Endothelial cell of umbilical vein (primary cell): ENCODE measurements at regions of chr5 and their contacts with region 1.

Region 1: DNA sequence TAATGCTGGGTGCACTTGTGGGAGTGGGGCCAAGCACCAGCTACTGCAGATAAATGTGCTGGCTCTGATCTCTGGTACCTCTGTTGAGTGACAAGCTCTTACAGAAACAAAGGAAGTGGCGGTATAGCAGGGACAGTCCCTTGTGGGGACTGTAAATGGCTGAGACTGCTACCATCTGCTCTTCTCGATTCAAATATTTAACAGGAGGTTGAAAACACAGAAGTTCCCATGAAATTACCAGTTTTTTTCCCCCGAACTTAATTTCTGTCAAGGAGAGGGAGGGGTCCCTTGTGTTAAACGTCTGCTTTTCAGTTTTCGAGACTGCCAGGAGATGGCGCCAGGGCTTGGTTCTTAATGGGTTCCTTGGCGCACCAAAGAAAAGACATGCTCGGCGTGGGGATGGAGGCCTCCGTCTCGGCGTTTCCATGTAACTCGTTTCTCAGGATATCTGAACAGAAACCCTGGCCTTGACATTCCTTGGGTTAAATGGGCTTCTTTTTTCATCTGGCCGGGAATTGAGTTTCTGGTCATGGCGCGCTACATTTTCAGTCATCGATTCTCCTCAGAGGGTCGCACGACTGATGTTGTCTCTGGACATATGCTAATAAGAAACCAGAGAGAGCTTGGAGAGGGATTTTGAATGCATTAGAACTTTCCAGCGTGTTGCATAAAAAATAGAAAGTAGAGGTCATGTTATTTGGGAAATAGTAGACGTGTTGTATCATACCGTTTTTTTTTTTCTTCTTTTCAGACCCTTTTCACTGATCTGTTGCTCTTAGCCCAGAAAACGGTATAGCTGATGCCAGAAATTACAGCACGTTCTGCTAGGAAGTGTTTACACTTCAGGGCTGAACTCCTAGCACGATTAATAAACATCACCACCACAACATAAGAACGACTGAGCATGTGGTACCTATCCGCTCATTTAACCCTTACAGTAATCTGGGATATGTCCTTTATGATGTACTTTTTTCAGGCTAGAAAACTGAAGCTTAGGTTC is 64.0 kb downstream of the CARTPT start:
- DNase-seq: peak; percentile 74
- H3K4me3 ChIP-seq: no peak overlapping the region
- H3K27ac ChIP-seq: no peak overlapping the region
- H3K4me1 ChIP-seq: peaks cover 6% of the 10 kb centered on the region
- H3K27me3 ChIP-seq: peaks cover 17 to 23% of the 10 kb centered on the region in 2 experiments
- CTCF ChIP-seq: peak; percentile 77 to 79
- POLR2A ChIP-seq: no peak

Region 2: GRCh38 chr5:71816307-71816706 is 33.2 kb after region 1 on chr5:
- CTCF ChIA-PET with region 1: no interaction called
- POLR2A ChIA-PET with region 1: no interaction called
- dilution Hi-C with region 1: no loop called
- intact Hi-C with region 1: no loop called
- DNase-seq: no peak
- H3K4me3 ChIP-seq: no peak overlapping the region
- H3K27ac ChIP-seq: no peak overlapping the region
- H3K4me1 ChIP-seq: no peaks in the 10 kb centered on the region
- H3K27me3 ChIP-seq: peaks cover 6 to 10% of the 10 kb centered on the region in 2 experiments
- CTCF ChIP-seq: no peak
- POLR2A ChIP-seq: no peak

Region 3: GRCh38 chr5:71922584-71923106 is 139.6 kb after region 1 on chr5:
- CTCF ChIA-PET with region 1: interaction called, 8 read pairs
- POLR2A ChIA-PET with region 1: no interaction called
- dilution Hi-C with region 1: no loop called
- intact Hi-C with region 1: loop called (anchors 10 kb)
- DNase-seq: peak; percentile 87
- H3K4me3 ChIP-seq: no peak overlapping the region
- H3K27ac ChIP-seq: peak overlapping the region; percentile 41
- H3K4me1 ChIP-seq: peaks cover 23% of the 10 kb centered on the region
- H3K27me3 ChIP-seq: peaks cover 0 to 14% of the 10 kb centered on the region in 2 experiments
- CTCF ChIP-seq: no peak
- POLR2A ChIP-seq: no peak

Region 4: GRCh38 chr5:72018146-72018803 is 235.2 kb after region 1 on chr5:
- CTCF ChIA-PET with region 1: interaction called, 63 read pairs
- POLR2A ChIA-PET with region 1: no interaction called
- dilution Hi-C with region 1: no loop called
- intact Hi-C with region 1: loop called (anchors 1 kb)
- DNase-seq: peak; percentile 64
- H3K4me3 ChIP-seq: no peak overlapping the region
- H3K27ac ChIP-seq: no peak overlapping the region
- H3K4me1 ChIP-seq: no peaks in the 10 kb centered on the region
- H3K27me3 ChIP-seq: peaks cover 19 to 38% of the 10 kb centered on the region in 2 experiments
- CTCF ChIP-seq: peak; percentile 88 to 94
- POLR2A ChIP-seq: no peak

Region 5: GRCh38 chr5:72268753-72269410 is 485.8 kb after region 1 on chr5:
- CTCF ChIA-PET with region 1: interaction called, 4 read pairs
- POLR2A ChIA-PET with region 1: no interaction called
- dilution Hi-C with region 1: no loop called
- intact Hi-C with region 1: loop called (anchors 2 kb)
- DNase-seq: peak; percentile 70
- H3K4me3 ChIP-seq: no peak overlapping the region
- H3K27ac ChIP-seq: no peak overlapping the region
- H3K4me1 ChIP-seq: peaks cover 2% of the 10 kb centered on the region
- H3K27me3 ChIP-seq: no peaks in the 10 kb centered on the region
- CTCF ChIP-seq: peak; percentile 60 to 67
- POLR2A ChIP-seq: no peak

Region 6: DNA sequence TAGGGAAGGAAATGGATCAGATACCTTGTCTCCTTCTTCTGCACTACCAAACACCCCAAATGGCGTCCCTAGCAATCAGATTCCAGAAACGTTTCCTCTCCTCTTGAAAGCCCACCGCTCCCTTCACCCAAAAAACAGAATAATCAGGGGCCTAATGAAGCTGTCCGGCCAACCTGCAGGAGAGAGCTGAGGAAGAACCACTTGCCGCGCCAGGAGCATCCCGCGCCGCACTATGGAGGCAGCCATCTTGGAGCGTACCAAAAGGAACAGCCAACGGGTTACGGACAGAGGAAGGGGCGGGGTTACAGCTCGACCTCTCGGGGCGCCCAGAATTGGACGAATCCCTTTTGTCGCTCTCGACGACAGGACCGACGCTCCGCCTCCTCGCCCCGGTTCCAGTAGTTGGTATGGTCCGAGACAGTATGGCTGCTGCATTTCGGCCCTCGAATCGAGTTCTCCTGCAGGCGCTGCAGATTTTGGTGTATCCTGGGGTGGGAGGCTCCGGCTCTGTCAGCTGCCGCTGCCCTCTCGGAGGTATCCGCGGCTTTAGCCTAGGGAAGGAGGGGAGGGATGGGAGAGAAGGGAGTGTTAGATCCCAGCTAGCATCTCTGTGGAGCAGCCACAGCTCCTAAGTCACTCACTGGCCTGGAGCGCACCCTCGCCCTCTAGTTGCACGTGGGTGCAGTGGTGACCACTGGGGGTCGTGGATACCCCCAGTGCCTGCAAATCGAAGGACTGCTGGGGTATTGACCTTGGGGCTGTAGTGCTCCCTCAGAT is 537.1 kb after region 1 on chr5 and contains the starts of genes MRPS27 and PTCD2:
- CTCF ChIA-PET with region 1: interaction called, 11 read pairs
- POLR2A ChIA-PET with region 1: no interaction called
- dilution Hi-C with region 1: no loop called
- intact Hi-C with region 1: no loop called
- DNase-seq: peak; percentile 98
- H3K4me3 ChIP-seq: peak within 1 kb of the TSS; percentile 49 to 80 (median 70)
- H3K27ac ChIP-seq: peak within 1 kb of the TSS; percentile 14
- H3K4me1 ChIP-seq: peaks cover 6% of the 10 kb centered on the region
- H3K27me3 ChIP-seq: no peaks in the 10 kb centered on the region
- CTCF ChIP-seq: peak; percentile 8 to 28
- POLR2A ChIP-seq: peak; percentile 97
- total RNA-seq, gene MRPS27: 58.0 and 67.1 TPM in 2 replicates
- total RNA-seq, gene PTCD2: 6.2 and 6.7 TPM in 2 replicates

Region 7: DNA sequence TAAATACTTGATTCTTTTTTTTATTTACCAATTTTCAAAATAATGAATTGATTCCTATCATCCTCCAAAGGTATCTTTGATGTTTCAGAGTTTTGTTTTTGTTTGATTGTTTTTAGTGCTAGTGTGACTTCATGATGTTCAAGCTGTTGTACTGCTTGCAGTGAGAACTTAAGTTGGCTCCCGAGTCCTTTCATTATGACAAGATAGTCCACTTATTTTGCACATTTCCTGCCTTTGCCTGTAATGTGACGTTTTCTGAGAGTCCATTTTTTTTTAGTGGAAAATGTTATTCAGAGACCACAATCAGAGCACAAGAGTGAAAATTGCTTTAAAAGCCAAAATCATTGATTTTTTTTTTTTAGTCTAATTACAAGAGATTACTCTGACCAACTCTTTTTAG is 1112.7 kb after region 1 on chr5:
- CTCF ChIA-PET with region 1: no interaction called
- POLR2A ChIA-PET with region 1: no interaction called
- dilution Hi-C with region 1: no loop called
- intact Hi-C with region 1: no loop called
- DNase-seq: no peak
- H3K4me3 ChIP-seq: no peak overlapping the region
- H3K27ac ChIP-seq: no peak overlapping the region
- H3K4me1 ChIP-seq: no peaks in the 10 kb centered on the region
- H3K27me3 ChIP-seq: no peaks in the 10 kb centered on the region
- CTCF ChIP-seq: no peak
- POLR2A ChIP-seq: no peak